ENCODE measurements at regions of chr9 and their contacts with region 1.

Region 1: GRCh38 chr9:21828853-21829410 is 26.5 kb downstream of the MTAP start:
- DNase-seq: no peak
- H3K4me3 ChIP-seq: no peak overlapping the region
- H3K27ac ChIP-seq: no peak overlapping the region
- H3K4me1 ChIP-seq: peaks cover 0 to 14% (median 3%) of the 10 kb centered on the region in 4 donors
- H3K27me3 ChIP-seq: no peaks in the 10 kb centered on the region
- CTCF ChIP-seq: no peak
- EP300 ChIP-seq: no peak
- POLR2A ChIP-seq: no peak

Region 2: DNA sequence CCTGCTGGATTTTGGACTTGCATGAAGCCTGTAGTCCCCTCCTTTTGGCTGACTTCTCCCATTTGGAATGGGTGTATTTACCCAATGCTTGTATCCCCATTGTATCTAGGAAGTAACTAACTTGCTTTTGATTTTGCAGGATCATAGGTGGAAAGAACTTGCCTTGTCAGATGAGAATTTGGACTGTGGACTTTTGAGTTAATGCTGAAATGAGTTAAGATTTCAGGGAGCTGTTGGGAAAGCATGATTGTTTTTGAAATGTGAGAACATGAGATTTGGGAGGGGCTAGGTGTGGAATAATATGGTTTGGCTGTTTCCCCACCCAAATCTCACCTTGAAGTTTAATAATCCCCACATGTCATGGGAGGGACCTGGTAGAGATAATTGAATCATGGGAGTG is 369.7 kb after region 1 on chr9:
- intact Hi-C with region 1: loop called (anchors 5 kb)
- DNase-seq: no peak
- H3K4me3 ChIP-seq: no peak overlapping the region
- H3K27ac ChIP-seq: no peak overlapping the region
- H3K4me1 ChIP-seq: no peaks in the 10 kb centered on the region
- H3K27me3 ChIP-seq: peaks cover 0 to 9% (median 0%) of the 10 kb centered on the region in 3 donors
- CTCF ChIP-seq: no peak
- EP300 ChIP-seq: no peak
- POLR2A ChIP-seq: no peak